Activated naive CD4-positive, alpha-beta T cell treated with anti-CD3 and anti-CD28 coated beads for 36 hours (primary cell): ENCODE measurements at regions of chr11 and their contacts with region 1.

Region 1: GRCh38 chr11:65859200-65859811 is 927 bp upstream of the MUS81 start:
- DNase-seq: peak; percentile 99
- H3K4me3 Mint-ChIP-seq: peak overlapping the region; percentile 97
- H3K27ac Mint-ChIP-seq: peak overlapping the region; percentile 100
- H3K4me1 Mint-ChIP-seq: peaks cover 41% of the 10 kb centered on the region
- H3K27me3 Mint-ChIP-seq: no peaks in the 10 kb centered on the region

Region 2: GRCh38 chr11:65180877-65181568 is 678.3 kb before region 1 on chr11:
- CTCF ChIA-PET with region 1: no interaction called
- intact Hi-C with region 1: loop called (anchors 2 kb)
- DNase-seq: peak; percentile 59
- H3K4me3 Mint-ChIP-seq: peak overlapping the region; percentile 80
- H3K27ac Mint-ChIP-seq: no peak overlapping the region
- H3K4me1 Mint-ChIP-seq: peaks cover 15% of the 10 kb centered on the region
- H3K27me3 Mint-ChIP-seq: no peaks in the 10 kb centered on the region

Region 3: GRCh38 chr11:65662799-65663638 is 196.3 kb before region 1 on chr11 and contains the start of gene RELA:
- CTCF ChIA-PET with region 1: no interaction called
- intact Hi-C with region 1: loop called (anchors 1 kb)
- DNase-seq: peak; percentile 95
- H3K4me3 Mint-ChIP-seq: peak within 1 kb of the TSS; percentile 85
- H3K27ac Mint-ChIP-seq: peak within 1 kb of the TSS; percentile 94
- H3K4me1 Mint-ChIP-seq: peaks cover 37% of the 10 kb centered on the region
- H3K27me3 Mint-ChIP-seq: no peaks in the 10 kb centered on the region
- total RNA-seq, gene RELA: 66.9 to 68.5 TPM

Region 4: DNA sequence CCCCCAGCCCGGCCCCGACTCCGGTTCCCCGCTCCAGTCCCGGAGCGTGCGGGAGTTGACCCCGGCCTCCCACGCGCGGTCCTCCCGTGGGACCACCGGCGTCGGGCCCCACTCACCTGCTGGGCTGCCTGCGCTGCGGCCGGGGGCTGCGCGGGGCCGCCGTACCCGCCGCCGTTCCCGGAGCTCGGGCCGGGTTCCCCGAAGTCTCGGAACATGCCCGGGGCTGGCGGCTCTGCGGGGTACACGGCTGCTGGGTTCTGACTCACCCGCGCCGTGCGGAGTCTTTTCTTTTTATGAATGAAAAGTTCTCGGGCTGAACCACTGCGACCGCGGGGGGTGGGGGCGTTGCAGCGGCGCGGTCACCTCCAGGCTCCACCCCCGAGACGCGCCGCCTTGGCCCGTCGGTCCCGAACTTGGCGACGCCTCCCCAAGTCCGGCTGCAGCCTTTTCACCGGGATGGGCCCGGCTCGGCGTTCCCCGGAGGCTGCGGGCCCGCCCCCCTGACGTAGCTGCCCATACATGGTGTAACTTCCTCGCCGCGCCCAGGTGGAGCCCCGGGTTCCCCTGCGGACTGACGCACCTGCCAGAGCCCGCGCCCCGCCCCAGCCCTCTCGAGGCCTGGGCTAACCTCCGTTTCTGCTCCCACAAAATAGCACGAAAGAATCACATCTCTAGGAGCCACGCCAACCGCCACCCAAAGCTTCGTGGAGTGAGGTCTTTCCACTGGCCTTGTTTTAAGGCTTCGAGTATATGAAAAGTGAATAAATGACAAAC is 41.0 kb after region 1 on chr11 and contains the start of gene FOSL1:
- CTCF ChIA-PET with region 1: interaction called, 4 read pairs
- intact Hi-C with region 1: loop called (anchors 1 kb)
- DNase-seq: peak; percentile 96
- H3K4me3 Mint-ChIP-seq: peak within 1 kb of the TSS; percentile 83
- H3K27ac Mint-ChIP-seq: peak within 1 kb of the TSS; percentile 79
- H3K4me1 Mint-ChIP-seq: peaks cover 33% of the 10 kb centered on the region
- H3K27me3 Mint-ChIP-seq: peaks cover 2% of the 10 kb centered on the region
- total RNA-seq, gene FOSL1: 8.2 TPM

Region 5: DNA sequence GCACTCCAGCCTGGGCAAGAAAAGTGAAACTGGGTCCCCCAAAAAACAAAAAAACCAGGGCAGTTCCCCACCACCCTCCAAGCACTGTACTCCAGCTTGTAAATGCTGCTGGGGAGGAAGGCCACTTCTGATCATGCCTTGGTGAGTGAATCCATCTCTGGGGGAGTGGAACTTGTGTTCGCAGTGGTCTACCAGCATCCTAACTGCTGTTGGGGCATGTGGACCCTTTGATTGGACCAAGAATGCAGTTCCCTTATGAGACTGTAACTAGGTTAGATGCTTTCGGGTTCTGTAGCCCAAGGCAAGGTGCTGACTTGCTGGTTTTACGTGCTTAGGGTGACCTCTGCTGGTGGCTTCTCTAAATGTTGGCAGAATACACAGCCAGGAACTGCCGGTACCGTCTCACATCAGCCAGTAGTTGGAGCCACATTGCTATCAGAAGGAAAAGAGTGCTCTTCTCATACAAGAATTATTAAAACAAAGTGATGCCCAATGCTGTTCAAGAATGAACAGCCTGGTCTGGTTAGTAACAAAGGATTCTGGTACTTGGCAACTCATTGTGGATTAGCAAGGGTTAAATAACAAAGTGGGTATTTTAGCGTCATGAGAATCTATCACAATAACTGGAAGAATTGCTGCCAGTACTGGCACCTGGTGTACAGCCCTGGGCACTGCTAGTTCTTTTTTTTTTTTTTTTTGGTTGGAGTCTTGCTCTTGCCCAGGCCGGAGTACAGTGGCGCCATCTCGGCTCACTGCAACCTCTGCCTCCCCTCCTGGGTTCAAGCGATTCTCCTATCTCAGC is 129.7 kb after region 1 on chr11:
- CTCF ChIA-PET with region 1: interaction called, 4 read pairs
- intact Hi-C with region 1: loop called (anchors 1 kb)
- DNase-seq: peak; percentile 98
- H3K4me3 Mint-ChIP-seq: no peak overlapping the region
- H3K27ac Mint-ChIP-seq: peak overlapping the region; percentile 70
- H3K4me1 Mint-ChIP-seq: peaks cover 4% of the 10 kb centered on the region
- H3K27me3 Mint-ChIP-seq: no peaks in the 10 kb centered on the region

Region 6: DNA sequence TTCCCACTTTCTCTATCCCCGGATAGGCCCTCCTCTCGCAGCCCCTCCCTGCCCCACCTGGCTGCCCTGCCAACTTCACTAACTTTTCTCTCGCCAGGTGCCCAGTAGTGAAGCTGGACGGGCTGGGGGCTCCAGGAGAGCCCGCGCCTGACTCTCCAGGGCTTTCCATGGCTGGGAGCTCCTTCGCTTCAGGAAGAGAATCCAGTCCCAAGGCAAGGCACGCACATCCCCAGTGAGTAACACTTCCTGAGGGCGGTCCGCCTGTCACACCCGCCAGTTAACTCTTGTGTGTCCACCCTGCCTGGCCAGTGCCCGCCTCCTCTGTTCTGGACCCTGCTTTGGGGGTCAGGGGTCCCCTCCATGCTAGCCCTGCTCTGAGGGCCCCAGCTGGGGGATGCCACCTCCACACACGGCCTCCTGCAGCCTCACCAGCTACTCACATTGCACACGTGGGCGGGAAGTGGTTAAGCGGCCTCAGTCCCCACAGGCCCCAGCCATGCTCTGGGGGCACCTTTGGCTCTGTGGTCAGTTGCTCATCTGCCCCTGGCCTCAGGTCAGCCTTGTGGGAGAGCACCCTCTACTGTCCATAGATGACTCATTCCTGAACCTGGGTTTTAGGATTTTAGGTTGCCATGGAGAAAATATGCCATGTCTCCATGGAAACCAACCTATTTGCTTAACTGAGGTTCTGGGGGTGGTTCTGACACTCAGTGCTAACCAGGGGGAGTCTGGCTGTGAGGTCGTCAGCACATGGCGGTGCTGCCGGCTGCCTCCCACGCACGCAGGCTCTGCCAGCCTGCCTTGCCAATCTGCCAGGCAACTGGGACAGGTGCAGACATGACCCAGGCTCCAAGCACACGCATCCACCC is 477.2 kb after region 1 on chr11 and contains the start of gene RIN1:
- CTCF ChIA-PET with region 1: no interaction called
- intact Hi-C with region 1: no loop called
- DNase-seq: peak; percentile 64
- H3K4me3 Mint-ChIP-seq: peak within 1 kb of the TSS; percentile 82
- H3K27ac Mint-ChIP-seq: peak within 1 kb of the TSS; percentile 63
- H3K4me1 Mint-ChIP-seq: peaks cover 20% of the 10 kb centered on the region
- H3K27me3 Mint-ChIP-seq: no peaks in the 10 kb centered on the region
- total RNA-seq, gene RIN1: 2.0 to 2.6 TPM